KBM-7 (cell line): ENCODE measurements at regions of chr6 and their contacts with region 1.

Region 1: GRCh38 chr6:18327626-18328025 is 59.5 kb upstream of the RNF144B start:
- DNase-seq: no peak

Region 2: DNA sequence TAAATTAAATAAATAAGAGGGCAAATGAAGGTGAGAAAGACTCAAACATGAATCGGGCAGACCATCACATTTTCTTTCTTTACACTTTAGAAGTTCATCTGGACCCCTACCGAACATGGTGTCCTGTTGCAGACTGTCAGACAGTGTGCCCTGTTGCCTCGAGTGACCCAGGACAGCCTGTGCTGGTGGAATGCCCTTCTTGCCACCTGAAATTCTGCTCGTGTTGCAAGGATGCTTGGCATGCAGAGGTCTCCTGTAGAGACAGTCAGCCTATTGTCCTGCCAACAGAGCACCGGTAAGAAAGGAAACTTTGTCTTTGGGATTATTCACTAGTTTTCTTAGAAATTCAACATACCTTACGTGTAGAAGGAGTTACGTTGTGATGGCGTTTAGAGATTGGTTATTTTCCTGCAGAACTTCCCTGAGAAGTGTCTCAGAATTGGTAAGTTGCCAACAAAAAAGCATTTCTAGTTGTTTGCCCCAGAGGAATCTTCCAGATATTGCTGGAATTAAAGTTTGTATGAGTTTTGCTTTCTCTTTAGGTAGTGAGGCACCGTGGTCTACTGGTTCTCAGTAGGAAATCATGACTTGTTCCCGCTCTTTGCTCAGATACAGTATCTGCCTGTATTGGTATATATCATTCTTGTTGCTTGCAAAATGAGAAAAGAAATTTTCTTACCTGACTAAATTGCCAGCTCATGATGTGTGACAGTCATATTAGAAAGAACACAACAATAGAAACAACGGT is 129.6 kb after region 1 on chr6:
- in situ Hi-C with region 1: no loop called
- DNase-seq: no peak

Region 3: DNA sequence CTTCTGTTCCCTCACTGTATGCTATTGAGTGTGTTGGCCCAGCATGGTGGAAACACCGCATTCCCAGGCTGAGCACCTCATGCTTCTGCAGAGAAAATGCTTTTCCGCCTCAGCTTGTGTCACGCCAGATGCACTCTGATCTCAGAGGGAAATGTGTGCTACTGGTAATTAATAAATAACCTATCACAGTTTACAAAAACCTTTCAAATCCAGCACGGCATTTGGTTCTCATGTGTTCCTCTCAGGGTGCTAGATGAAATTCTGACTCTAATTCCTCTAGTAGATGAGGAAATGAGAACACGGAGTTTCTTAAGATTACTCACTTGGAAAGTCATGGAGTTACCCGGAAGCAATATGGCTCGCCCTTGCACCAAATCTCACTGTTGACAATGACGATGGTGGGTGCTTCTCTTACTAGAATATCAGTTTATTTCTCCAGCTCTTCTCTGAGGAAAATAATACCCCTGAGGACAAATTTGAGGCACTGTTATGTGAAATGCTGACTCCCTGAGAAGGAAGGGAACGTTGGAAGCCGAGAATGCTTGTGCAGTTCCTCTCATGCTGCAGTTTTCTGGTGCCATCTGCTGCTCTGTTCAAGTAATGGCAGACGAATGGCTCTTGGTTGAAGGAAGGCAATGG is 176.1 kb after region 1 on chr6:
- in situ Hi-C with region 1: loop called (anchors 25 kb)
- DNase-seq: peak; percentile 57